Sigmoid colon (tissue), 7 donors: ENCODE measurements at regions of chr3 and their contacts with region 1.

Region 1: DNA sequence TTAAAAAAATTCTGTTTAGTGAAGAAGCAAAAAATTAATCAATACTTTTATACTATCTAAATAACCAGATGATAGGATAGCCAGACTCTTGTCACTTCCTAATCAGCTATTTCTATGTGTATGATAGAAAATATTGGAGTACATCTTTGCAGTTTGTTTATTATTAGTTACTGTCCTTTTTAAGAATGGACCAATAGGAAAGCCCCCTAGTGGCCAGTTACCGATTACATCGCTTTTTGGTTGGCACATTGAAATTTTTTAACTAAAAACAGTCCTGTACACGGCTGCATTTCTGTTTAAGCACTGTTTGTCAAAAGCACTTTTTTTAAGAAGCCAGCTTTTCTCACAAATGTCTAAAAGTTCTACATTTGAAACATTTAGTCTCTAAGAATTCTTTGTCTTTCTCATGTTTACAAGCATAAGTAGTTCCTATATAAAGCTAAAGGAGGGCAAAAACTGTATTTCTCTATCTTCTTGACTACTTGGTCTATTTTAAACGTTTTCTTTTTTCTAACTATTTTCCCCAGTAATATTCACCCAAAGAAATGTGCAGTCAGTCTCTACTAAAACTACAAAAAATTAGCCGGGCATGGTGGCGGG is 253.2 kb upstream of the LRTM1 start:
- DNase-seq: no peak
- H3K4me3 ChIP-seq: no peak overlapping the region
- H3K27ac ChIP-seq: no peak overlapping the region
- H3K4me1 ChIP-seq: peaks cover 0 to 4% (median 0%) of the 10 kb centered on the region in 4 donors
- H3K27me3 ChIP-seq: no peaks in the 10 kb centered on the region
- CTCF ChIP-seq: peak in 3 of 4 experiments; percentile 45 to 71 (median 56)
- EP300 ChIP-seq: no peak
- POLR2A ChIP-seq: no peak

Region 2: DNA sequence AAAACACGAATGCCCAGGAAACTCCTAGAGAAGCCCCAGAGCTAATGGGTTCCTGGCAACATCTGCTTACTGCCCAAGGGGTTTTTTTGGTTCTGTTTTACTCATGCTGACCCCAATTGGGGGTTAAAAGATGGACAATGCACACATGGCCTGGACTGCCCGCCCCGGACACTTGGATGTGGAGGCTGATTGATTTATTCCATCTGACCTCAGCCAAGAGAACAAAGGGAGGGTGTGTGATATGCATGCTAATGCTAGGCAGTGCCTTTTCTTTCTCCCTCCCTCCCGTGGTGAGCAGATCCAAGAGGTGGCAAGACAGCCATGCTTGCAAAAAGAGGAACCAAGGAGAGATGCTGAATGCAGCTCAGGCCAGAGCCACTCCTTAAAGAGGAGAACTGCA is 249.9 kb before region 1 on chr3:
- intact Hi-C with region 1: no loop called
- DNase-seq: no peak
- H3K4me3 ChIP-seq: no peak overlapping the region
- H3K27ac ChIP-seq: no peak overlapping the region
- H3K4me1 ChIP-seq: no peaks in the 10 kb centered on the region
- H3K27me3 ChIP-seq: no peaks in the 10 kb centered on the region
- CTCF ChIP-seq: no peak
- EP300 ChIP-seq: no peak
- POLR2A ChIP-seq: no peak

Region 3: DNA sequence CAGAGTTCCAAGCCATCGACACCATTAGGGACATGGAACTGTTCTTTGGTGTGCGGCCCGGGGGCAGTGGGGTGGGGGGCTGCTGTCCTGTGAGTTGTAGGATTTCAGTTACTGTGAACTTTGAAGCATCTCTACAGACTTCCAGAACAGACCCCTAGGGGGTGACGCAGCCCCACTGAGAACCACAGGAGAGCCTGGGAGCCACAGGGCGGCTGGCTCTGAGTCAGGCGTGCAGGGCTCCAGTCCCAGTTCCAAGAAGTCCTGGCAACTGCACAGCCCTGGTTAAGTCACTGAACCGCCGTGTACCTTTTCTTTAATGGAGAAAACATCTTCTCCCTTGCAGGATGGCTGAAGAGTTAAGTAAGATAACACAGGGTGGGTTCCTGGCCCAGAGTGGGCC is 229.6 kb before region 1 on chr3:
- intact Hi-C with region 1: loop called (anchors 5 kb)
- DNase-seq: peak; percentile 90
- H3K4me3 ChIP-seq: no peak overlapping the region
- H3K27ac ChIP-seq: peak overlapping the region in 1 of 4 donors; percentile 44
- H3K4me1 ChIP-seq: peaks cover 0 to 39% (median 22%) of the 10 kb centered on the region in 4 donors
- H3K27me3 ChIP-seq: no peaks in the 10 kb centered on the region
- CTCF ChIP-seq: peak; percentile 37 to 73 (median 64)
- EP300 ChIP-seq: no peak
- POLR2A ChIP-seq: no peak

Region 4: GRCh38 chr3:55074796-55075195 is 106.2 kb before region 1 on chr3:
- intact Hi-C with region 1: no loop called
- DNase-seq: no peak
- H3K4me3 ChIP-seq: no peak overlapping the region
- H3K27ac ChIP-seq: peak overlapping the region in 1 of 4 donors; percentile 16
- H3K4me1 ChIP-seq: peaks cover 0 to 18% (median 11%) of the 10 kb centered on the region in 4 donors
- H3K27me3 ChIP-seq: no peaks in the 10 kb centered on the region
- CTCF ChIP-seq: no peak
- EP300 ChIP-seq: no peak
- POLR2A ChIP-seq: no peak

Region 5: GRCh38 chr3:55246033-55246432 is 65.0 kb after region 1 on chr3:
- intact Hi-C with region 1: no loop called
- DNase-seq: no peak
- H3K4me3 ChIP-seq: no peak overlapping the region
- H3K27ac ChIP-seq: no peak overlapping the region
- H3K4me1 ChIP-seq: no peaks in the 10 kb centered on the region
- H3K27me3 ChIP-seq: no peaks in the 10 kb centered on the region
- CTCF ChIP-seq: no peak
- EP300 ChIP-seq: no peak
- POLR2A ChIP-seq: no peak